ENCODE measurements at regions of chr12 and their contacts with region 1.

Region 1: DNA sequence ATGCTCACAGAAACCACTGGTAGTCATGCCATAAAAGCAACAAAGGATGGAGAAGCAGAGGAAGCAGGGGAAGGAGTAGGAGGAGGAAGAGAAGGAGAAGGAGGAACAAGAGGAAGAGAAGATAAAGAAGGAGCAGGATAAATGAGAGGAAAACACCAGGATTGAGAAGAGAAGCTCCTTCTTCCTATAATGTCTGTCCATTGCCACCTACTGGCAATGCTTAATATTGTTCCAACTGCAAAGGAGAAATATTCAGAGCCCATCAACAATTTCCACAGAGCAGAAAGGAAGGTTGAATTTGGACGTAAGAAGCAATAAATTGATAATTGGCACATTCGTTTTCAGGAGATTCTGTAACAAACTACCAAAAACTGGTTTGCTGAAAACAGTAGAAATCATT is 898.4 kb downstream of the SLC16A7 start:
- DNase-seq: peak; percentile 66
- H3K4me3 ChIP-seq: no peak overlapping the region
- H3K27ac ChIP-seq: no peak overlapping the region
- H3K4me1 ChIP-seq: peaks cover 8% of the 10 kb centered on the region; the same call in 1 of the 2 replicates
- H3K27me3 ChIP-seq: no peaks in the 10 kb centered on the region

Region 2: GRCh38 chr12:59808317-59808910 is 685.8 kb before region 1 on chr12:
- in situ Hi-C with region 1: loop called (anchors 25 kb)
- DNase-seq: peak; percentile 71
- H3K4me3 ChIP-seq: no peak overlapping the region
- H3K27ac ChIP-seq: no peak overlapping the region
- H3K4me1 ChIP-seq: no peaks in the 10 kb centered on the region
- H3K27me3 ChIP-seq: no peaks in the 10 kb centered on the region

Region 3: GRCh38 chr12:61514016-61514415 is 1019.8 kb after region 1 on chr12:
- in situ Hi-C with region 1: no loop called
- DNase-seq: no peak
- H3K4me3 ChIP-seq: no peak overlapping the region
- H3K27ac ChIP-seq: no peak overlapping the region
- H3K4me1 ChIP-seq: no peaks in the 10 kb centered on the region
- H3K27me3 ChIP-seq: no peaks in the 10 kb centered on the region